ENCODE measurements at regions of chr3 and their contacts with region 1.

Region 1: DNA sequence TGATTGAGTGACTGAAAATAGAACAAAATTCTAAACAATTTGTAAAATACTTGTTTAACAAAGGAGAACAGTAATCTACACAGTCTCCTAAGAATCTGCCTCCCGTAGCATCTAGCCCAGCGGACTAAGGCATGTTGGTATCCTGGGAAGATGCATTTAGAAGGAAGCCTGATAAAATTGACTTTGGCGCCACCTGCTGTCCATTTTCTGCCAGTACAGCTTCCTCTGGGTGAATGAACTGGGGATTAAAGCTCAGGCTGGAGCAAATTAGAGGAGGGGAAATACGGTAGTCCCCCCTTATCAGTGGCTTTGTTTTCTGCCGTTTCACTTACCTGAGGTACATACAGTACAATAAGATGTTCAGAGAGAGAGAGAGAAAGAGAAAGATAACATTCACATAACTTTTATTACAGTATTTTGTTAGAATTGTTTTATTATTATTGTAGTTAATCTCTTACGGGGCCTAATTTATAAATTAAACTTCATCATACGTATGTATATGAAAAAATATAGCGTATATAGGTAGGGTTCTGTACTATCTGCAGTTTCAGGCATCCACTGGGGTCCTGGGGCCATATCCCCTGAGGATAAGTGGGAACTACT is 191.6 kb downstream of the GAP43 start:
- DNase-seq: peak; percentile 68 to 71
- ATAC-seq: peak; percentile 95
- H3K4me3 ChIP-seq: no peak overlapping the region
- H3K27ac ChIP-seq: no peak overlapping the region; a peak in 1 of 6 replicates
- H3K4me1 ChIP-seq: peaks cover 7% of the 10 kb centered on the region; the same call in 1 of the 3 replicates
- CTCF ChIP-seq: peak; percentile 90
- EP300 ChIP-seq: no peak
- POLR2A ChIP-seq: no peak
- RAD21 ChIP-seq: peak; percentile 94

Region 2: DNA sequence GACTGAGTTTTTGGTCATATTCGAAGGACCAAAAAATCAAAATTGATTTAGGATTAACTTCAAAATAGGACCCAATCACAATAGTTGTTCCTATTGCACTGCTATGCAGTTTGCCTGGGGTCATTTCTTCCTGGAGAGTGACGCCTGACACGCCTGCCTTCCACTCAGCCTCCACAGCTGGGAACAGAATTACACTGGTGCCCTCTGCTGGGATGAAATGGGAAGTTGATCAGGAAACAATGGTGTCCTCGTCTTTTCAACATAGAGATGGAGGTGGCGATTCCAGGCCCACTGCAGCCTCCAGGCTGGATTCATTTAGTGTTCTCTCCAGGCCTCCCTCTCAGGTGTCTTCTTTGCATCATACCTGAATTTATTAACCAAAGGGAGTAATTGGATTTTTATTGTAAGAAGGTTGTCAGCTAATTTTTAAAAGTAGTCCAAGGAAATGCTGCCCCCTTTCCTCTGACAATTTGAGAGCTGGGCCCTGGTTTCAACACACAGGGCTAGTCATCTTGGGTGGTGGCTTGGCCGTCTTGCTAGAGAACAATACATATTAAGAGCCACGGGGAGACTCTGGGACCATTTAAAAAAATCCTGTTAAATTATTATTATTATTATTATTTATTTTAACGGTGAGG is 121.9 kb before region 1 on chr3:
- CTCF ChIA-PET with region 1: interaction called, 10 read pairs
- POLR2A ChIA-PET with region 1: no interaction called
- DNase-seq: peak; percentile 65 to 77
- ATAC-seq: peak; percentile 99 to 100
- H3K4me3 ChIP-seq: no peak overlapping the region
- H3K27ac ChIP-seq: peak overlapping the region; percentile 30 to 42; a peak in 2 of 6 replicates
- H3K4me1 ChIP-seq: peaks cover 15% of the 10 kb centered on the region; the same call in 2 of the 3 replicates
- CTCF ChIP-seq: peak; percentile 92
- EP300 ChIP-seq: no peak
- POLR2A ChIP-seq: no peak
- RAD21 ChIP-seq: peak; percentile 97 to 98